A673 (cell line): ENCODE measurements at regions of chr14 and their contacts with region 1.

Region 1: DNA sequence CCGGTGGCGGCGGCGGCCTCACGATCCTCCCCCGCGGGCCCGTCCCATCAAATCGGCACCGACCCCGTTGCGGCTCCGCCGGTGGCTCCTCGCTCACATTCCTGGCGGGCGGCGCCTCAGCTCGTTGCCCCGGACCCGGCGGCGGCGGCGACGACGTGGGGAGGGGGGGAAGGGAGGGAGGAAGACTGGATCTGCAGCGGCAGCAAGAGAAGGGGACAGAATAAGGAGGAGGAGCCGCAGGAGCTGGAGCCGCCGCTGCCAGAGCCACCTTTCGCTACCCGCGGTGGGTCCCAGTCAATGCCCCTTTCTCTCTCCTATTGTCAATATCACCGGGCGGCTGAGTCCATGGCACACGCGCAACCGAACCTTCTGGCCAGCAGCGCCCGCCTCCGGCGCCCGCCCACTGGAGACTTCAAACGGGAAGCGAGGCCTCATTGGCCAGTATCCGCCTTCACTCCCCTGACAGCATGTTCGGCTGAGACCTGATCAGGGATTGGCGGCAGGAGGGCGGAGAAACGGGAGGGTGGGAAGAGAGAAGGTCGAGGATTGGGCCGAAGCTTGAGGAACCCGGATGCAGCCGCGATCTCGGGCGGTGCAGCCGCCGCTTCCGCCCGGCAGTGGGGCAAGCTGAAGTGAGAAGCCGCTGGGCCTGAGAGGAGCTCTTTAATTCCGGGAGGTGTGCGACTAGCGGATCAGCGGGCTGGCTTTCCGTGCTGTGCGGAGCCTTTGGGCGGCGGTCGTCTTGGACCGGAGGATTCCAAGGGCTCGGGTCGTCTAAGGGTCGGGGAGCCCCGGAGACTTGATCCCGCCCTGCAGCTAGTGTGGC is at the start of gene PPP2R5E:
- DNase-seq: peak; percentile 100
- H3K4me3 ChIP-seq: peak within 1 kb of the TSS; percentile 80
- H3K27ac ChIP-seq: peak within 1 kb of the TSS; percentile 86
- H3K4me1 ChIP-seq: peaks cover 6% of the 10 kb centered on the region
- H3K27me3 ChIP-seq: no peaks in the 10 kb centered on the region
- CTCF ChIP-seq: no peak
- total RNA-seq, gene PPP2R5E: 64.3 and 66.0 TPM in 2 replicates

Region 2: DNA sequence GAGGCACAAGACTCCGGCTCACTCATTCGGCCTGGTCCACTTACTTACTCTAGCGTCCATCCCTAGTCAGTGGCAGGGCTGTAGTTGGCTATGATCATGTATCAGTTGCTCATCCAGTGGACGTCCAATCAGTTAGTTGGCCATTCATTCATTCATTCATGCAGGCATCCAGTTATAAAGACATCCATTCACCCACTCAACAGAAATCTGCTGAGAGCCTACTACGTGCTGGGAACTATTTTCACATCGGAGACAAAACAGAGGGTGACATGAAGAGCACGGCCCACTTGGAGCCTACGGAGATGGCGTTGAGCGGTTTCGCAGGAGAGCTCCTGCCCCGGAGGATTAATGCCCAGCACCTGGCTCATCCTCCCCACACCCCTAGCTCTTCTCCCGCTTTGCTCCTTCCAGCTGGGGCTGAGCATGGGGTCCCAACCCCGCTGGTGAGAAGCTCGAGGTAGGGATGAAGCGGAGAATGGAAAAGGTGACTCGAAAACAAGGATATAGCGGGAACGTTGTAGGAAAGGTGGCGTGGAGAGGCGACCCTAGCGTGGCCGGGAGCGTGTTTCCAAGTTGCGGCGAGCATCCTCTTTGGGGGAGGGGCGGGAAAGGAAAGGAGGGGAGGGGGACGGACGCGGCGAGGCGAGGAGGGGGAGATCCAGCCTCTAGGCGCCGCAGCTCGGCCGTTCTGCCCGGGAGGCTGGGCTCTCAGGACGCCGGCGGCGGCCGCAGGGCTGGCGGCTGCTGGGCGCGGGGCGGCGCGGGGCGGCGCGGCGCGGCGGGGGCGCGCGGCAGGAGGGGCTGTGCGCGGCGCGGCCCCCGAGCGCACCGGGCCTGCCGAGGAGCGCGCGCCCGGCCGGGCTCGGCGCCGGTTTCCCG is 1731.1 kb before region 1 on chr14:
- CTCF ChIA-PET with region 1: no interaction called
- POLR2A ChIA-PET with region 1: no interaction called
- intact Hi-C with region 1: no loop called
- DNase-seq: no peak
- H3K4me3 ChIP-seq: peak within 1 kb of the TSS; percentile 51
- H3K27ac ChIP-seq: no peak within 1 kb of the TSS
- H3K4me1 ChIP-seq: no peaks in the 10 kb centered on the region
- H3K27me3 ChIP-seq: peaks cover 49% of the 10 kb centered on the region
- CTCF ChIP-seq: no peak

Region 3: GRCh38 chr14:62162998-62163589 is 1380.1 kb before region 1 on chr14:
- CTCF ChIA-PET with region 1: no interaction called
- POLR2A ChIA-PET with region 1: no interaction called
- intact Hi-C with region 1: no loop called
- DNase-seq: peak; percentile 74
- H3K4me3 ChIP-seq: no peak overlapping the region
- H3K27ac ChIP-seq: no peak overlapping the region
- H3K4me1 ChIP-seq: no peaks in the 10 kb centered on the region
- H3K27me3 ChIP-seq: no peaks in the 10 kb centered on the region
- CTCF ChIP-seq: peak; percentile 91

Region 4: DNA sequence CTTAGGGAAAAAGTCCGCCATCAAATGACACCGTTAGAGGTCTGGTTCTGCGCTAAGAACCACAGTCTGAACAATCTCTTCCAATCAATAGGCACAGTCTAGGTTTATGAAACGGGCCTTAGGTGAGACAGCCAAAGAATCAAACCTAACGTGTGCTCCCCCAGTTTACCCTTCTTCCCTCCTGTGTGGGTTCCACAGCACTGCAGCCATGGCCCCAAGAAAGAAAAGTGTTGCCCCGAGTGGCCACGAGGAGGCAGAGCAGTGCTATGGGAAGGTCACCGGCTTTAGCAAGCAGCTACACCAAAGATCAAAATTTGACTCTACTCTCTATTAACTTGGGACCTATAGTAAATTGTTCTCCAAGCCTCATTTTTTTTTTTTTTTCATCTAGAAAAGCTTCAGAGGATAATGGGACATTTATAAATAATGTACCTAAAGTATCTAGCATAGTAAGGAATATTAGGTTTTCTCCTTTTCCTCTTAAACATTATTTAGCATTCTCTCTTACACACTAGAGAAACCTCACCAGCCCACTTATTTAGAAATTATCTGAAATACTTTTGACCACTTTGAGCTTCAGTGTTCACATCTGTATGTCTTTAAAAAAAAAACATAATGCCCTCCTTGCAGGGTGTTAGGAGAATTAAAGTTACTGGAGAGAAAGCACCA is 154.3 kb before region 1 on chr14:
- CTCF ChIA-PET with region 1: no interaction called
- POLR2A ChIA-PET with region 1: no interaction called
- intact Hi-C with region 1: loop called (anchors 5 kb)
- DNase-seq: peak; percentile 69
- H3K4me3 ChIP-seq: no peak overlapping the region
- H3K27ac ChIP-seq: no peak overlapping the region
- H3K4me1 ChIP-seq: no peaks in the 10 kb centered on the region
- H3K27me3 ChIP-seq: no peaks in the 10 kb centered on the region
- CTCF ChIP-seq: peak; percentile 86